ENCODE measurements at regions of chr7 and their contacts with region 1.

Region 1: DNA sequence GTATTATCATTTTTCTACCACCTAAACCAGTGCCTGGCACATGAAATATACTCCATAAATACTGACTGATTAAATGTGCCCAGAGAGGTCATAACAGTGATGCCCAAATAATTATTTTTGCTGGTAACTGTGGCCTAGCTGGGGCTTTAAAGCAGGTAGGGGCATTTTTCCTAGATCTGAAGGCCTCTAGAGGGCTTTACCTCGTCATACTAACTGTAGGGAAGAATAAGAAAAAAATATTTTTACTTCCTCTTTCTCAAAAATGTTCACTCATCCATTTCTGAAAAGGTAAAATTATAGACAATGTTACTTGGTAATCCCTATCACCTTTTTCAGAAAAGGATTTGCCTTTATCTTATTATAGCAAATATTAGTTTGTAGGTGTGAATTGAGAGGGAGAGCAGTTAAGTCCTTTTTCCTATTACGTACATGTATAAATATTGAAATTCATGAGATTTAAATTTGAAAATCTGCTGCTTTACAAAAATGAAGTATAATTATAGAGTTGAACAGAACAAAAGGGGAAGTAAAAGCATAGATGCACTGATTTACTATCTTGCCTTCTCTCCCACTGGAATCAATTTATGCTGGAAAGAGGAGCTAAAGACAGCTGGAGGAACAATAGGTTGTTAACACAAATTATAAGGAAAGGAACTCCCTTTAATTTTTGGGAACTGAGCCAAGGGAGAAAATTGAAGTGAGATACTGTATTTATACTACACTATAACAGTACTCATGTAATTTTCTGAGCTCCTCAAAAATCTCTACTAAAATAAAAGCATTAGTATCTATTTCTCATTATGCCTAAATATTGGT is 71.5 kb upstream of the NOBOX start:
- DNase-seq: no peak
- ATAC-seq: no peak
- H3K4me3 ChIP-seq: no peak overlapping the region
- H3K27ac ChIP-seq: no peak overlapping the region
- H3K4me1 ChIP-seq: peaks cover 3% of the 10 kb centered on the region; the same call in 1 of the 2 replicates
- H3K27me3 ChIP-seq: no peaks in the 10 kb centered on the region
- CTCF ChIP-seq: no peak
- EP300 ChIP-seq: no peak
- POLR2A ChIP-seq: no peak
- RAD21 ChIP-seq: no peak

Region 2: DNA sequence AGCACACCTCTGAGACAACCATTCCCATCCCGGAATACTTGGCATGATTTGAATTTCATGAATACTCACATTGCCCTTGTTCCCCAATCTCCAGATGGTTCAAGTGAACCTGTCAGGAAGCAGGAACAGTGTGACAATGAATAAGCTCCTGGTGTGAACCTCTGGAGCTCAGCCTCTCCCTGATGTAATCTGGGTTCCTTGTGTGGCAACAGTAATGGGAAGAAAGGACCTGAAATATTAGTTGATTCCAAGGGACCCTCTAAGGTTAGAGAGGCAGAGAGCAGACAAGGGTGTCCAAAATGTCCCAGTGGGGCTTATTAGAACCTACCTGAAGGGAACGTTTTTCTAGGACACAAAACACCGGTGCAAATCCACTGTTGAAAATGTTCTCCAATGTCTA is 218.9 kb before region 1 on chr7:
- CTCF ChIA-PET with region 1: no interaction called
- POLR2A ChIA-PET with region 1: no interaction called
- RAD21 ChIA-PET with region 1: no interaction called
- SMC1A ChIA-PET with region 1: no interaction called
- in situ Hi-C with region 1: no loop called
- intact Hi-C with region 1: no loop called
- DNase-seq: no peak
- ATAC-seq: no peak
- H3K4me3 ChIP-seq: no peak overlapping the region
- H3K27ac ChIP-seq: no peak overlapping the region
- H3K4me1 ChIP-seq: no peaks in the 10 kb centered on the region
- H3K27me3 ChIP-seq: no peaks in the 10 kb centered on the region
- CTCF ChIP-seq: no peak
- EP300 ChIP-seq: no peak
- POLR2A ChIP-seq: no peak
- RAD21 ChIP-seq: no peak

Region 3: DNA sequence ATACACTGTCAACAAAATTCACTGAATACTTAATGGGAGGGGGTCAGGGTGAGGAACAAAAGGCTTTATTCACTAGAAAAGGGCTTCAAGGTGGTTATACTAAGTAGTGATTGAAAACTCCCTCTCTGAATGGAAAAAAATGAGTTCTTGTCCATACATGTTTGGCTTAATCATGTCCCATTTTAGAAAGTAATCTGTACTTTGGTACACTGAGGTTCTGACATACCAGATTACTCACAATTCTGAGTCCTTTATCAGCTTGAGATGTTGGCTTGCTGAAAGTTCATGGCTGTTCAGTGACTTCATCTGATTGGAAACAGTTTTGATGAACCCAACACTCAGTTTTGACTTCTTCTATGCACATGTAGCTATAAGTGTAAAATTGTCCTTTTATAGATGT is 58.7 kb before region 1 on chr7:
- CTCF ChIA-PET with region 1: no interaction called
- POLR2A ChIA-PET with region 1: no interaction called
- RAD21 ChIA-PET with region 1: no interaction called
- SMC1A ChIA-PET with region 1: no interaction called
- in situ Hi-C with region 1: no loop called
- intact Hi-C with region 1: no loop called
- DNase-seq: no peak
- ATAC-seq: no peak
- H3K4me3 ChIP-seq: no peak overlapping the region
- H3K27ac ChIP-seq: no peak overlapping the region
- H3K4me1 ChIP-seq: no peaks in the 10 kb centered on the region
- H3K27me3 ChIP-seq: no peaks in the 10 kb centered on the region
- CTCF ChIP-seq: no peak
- EP300 ChIP-seq: no peak
- POLR2A ChIP-seq: no peak
- RAD21 ChIP-seq: no peak

Region 4: DNA sequence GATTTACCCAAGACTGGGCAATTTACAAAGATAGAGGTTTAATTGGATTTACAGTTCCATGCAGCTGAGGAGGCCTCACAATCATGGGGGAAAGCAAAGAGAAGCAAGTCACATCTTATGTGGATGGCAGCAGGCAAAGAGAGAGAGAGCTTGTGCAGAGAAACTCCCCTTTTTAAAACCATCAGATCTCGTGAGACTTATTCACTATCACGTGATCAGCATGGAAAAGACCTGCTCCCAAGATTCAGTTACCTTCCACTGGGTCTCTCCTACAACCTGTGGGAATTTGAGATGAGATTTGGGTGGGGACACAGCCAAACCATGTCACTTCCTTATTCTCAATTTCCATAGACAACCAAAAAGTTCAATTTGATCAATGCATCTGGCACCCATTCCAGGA is 46.6 kb before region 1 on chr7:
- CTCF ChIA-PET with region 1: no interaction called
- POLR2A ChIA-PET with region 1: no interaction called
- RAD21 ChIA-PET with region 1: no interaction called
- SMC1A ChIA-PET with region 1: no interaction called
- in situ Hi-C with region 1: no loop called
- intact Hi-C with region 1: no loop called
- DNase-seq: no peak
- ATAC-seq: no peak
- H3K4me3 ChIP-seq: no peak overlapping the region
- H3K27ac ChIP-seq: no peak overlapping the region
- H3K4me1 ChIP-seq: no peaks in the 10 kb centered on the region
- H3K27me3 ChIP-seq: no peaks in the 10 kb centered on the region
- CTCF ChIP-seq: no peak
- EP300 ChIP-seq: no peak
- POLR2A ChIP-seq: no peak
- RAD21 ChIP-seq: no peak

Region 5: DNA sequence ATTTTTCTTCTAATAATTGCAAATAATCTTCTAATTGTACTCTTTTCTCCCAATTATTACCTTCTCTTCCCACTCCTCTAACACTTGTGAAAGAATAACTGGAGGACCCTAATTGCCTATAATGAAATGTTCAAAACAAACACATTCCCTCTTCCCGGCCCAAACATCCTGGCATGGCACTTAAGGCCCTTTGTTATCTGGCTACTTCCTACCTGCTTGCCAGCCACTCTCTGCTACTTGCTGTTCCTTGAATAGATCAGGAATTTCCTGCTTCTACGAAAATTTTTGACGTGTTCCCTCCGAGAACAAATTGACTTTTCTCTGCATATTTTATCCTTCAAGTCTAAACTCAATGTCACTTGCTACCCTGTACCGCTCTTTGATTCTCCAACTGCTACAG is 15.4 kb before region 1 on chr7:
- CTCF ChIA-PET with region 1: interaction called, 4 read pairs
- POLR2A ChIA-PET with region 1: no interaction called
- RAD21 ChIA-PET with region 1: no interaction called
- SMC1A ChIA-PET with region 1: no interaction called
- in situ Hi-C with region 1: no loop called
- intact Hi-C with region 1: loop called (anchors 2 kb)
- DNase-seq: no peak
- ATAC-seq: no peak
- H3K4me3 ChIP-seq: no peak overlapping the region
- H3K27ac ChIP-seq: no peak overlapping the region
- H3K4me1 ChIP-seq: no peaks in the 10 kb centered on the region
- H3K27me3 ChIP-seq: no peaks in the 10 kb centered on the region
- CTCF ChIP-seq: no peak
- EP300 ChIP-seq: no peak
- POLR2A ChIP-seq: no peak
- RAD21 ChIP-seq: no peak

Region 6: DNA sequence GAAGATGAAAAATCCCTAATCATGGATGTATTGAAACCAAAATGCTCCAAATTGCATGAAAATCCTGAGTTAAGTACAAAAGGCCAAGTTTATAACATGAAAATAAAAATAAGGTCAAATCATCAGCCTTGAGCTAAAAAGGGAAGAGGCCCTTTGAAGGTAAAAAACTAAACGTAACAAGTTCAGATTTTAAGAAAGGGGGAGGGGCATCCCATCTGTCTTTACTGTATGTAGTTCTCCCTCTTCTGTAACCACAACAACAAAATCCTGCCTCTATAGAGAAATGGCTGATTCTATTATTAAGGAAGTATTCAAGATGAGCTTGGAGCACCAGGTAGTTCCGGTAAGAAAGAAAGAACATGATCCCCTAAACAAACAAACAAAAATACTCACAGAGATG is 296.2 kb after region 1 on chr7:
- CTCF ChIA-PET with region 1: no interaction called
- POLR2A ChIA-PET with region 1: no interaction called
- RAD21 ChIA-PET with region 1: no interaction called
- SMC1A ChIA-PET with region 1: no interaction called
- in situ Hi-C with region 1: no loop called
- intact Hi-C with region 1: no loop called
- DNase-seq: no peak
- ATAC-seq: no peak
- H3K4me3 ChIP-seq: no peak overlapping the region
- H3K27ac ChIP-seq: no peak overlapping the region
- H3K4me1 ChIP-seq: no peaks in the 10 kb centered on the region
- H3K27me3 ChIP-seq: no peaks in the 10 kb centered on the region
- CTCF ChIP-seq: no peak
- EP300 ChIP-seq: no peak
- POLR2A ChIP-seq: no peak
- RAD21 ChIP-seq: no peak

Measured in GM12878 (cell line).